ENCODE measurements at regions of chr2 and their contacts with region 1.

Region 1: GRCh38 chr2:7886666-7887065 is 795.2 kb upstream of the ID2 start:
- DNase-seq: peak; percentile 42
- ATAC-seq: peak; percentile 80
- H3K4me3 ChIP-seq: no peak overlapping the region
- H3K27ac ChIP-seq: no peak overlapping the region
- H3K4me1 ChIP-seq: peaks cover 11% of the 10 kb centered on the region; the same call in 1 of the 2 replicates
- H3K27me3 ChIP-seq: no peaks in the 10 kb centered on the region
- CTCF ChIP-seq: no peak
- EP300 ChIP-seq: peak in 1 of 2 experiments; percentile 34; a peak in 2 of 4 replicates
- POLR2A ChIP-seq: no peak
- RAD21 ChIP-seq: no peak

Region 2: DNA sequence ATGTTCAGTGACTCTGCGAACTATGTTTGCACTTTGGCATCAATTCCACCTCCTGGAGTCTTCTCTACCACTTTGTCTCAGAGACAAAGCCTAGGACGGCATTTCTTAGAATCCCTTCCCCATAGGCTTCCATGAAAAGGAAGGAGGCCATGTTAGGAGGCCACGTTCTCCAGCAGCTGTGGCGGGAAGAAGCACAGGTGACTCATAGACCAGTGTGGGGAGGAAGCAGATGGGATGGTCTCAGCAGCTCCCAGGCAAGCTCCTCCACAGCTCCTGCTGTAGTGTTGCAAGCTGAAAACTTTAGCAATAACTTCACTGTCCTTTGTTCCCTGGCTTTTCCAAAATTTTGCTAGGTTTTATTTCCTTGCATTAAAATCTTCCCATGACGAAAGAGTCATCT is 13.9 kb after region 1 on chr2:
- CTCF ChIA-PET with region 1: no interaction called
- POLR2A ChIA-PET with region 1: no interaction called
- in situ Hi-C with region 1: no loop called
- intact Hi-C with region 1: no loop called
- DNase-seq: no peak
- ATAC-seq: no peak
- H3K4me3 ChIP-seq: no peak overlapping the region
- H3K27ac ChIP-seq: no peak overlapping the region
- H3K4me1 ChIP-seq: no peaks in the 10 kb centered on the region
- H3K27me3 ChIP-seq: no peaks in the 10 kb centered on the region; a peak in 1 of 5 replicates
- CTCF ChIP-seq: no peak
- EP300 ChIP-seq: no peak
- POLR2A ChIP-seq: no peak
- RAD21 ChIP-seq: no peak

Region 3: DNA sequence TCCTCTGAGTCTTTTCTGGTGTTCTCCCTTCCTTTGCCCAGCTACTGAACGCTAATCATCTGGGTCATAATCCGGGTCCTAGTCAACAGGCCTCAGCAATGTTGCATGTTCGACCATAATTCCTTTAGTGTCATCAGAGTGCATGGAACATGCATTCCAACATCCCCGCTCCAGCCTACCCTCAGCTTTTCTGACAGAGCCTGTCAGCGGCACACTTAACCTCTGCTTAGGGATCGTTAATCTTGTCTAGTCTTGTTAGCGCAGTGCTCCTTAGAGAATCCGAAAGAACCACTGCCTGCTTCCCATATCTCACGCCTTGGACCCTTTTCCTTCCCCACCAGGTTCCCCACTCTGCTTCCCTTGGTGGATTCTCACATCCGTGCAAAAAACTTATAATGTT is 27.3 kb after region 1 on chr2:
- CTCF ChIA-PET with region 1: no interaction called
- POLR2A ChIA-PET with region 1: no interaction called
- in situ Hi-C with region 1: no loop called
- intact Hi-C with region 1: no loop called
- DNase-seq: no peak
- ATAC-seq: no peak
- H3K4me3 ChIP-seq: no peak overlapping the region
- H3K27ac ChIP-seq: no peak overlapping the region
- H3K4me1 ChIP-seq: no peaks in the 10 kb centered on the region; the same call in 1 of the 2 replicates
- H3K27me3 ChIP-seq: no peaks in the 10 kb centered on the region
- CTCF ChIP-seq: no peak
- EP300 ChIP-seq: no peak
- POLR2A ChIP-seq: no peak
- RAD21 ChIP-seq: no peak

Region 4: DNA sequence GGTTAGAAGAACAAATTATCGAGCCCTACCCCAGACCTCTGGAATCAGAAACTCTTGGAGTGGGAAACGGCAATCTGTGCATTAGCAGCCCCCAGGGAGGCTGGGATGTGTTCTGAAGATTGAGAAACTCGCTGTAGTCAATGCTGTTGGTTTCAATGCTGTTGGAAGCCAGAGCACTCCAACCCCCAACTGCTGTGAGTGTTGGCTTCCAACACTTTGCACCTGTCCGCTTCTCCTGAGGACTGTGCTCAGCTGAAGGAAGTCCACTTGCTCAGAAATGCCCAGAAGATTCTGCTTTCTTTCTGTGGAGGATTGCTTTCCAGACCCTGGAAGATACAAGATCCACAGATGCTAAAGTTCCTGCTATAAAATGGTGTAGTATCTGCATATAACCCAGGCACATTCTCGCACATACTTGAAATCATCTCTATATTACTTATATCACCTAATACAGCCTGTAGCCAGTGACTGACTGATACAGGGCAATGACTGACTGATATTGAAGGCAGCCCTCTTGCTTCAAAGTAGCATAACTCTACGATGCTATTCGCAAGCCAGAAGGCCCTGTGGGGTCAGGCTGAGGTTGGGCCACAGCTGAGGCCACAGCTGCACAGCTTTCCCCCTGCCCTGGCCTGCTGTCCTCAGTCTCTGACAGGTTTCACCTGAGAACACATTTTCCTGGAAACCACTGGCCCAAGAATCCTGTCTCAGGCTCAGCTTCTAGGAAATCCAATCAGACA is 37.5 kb after region 1 on chr2:
- CTCF ChIA-PET with region 1: no interaction called
- POLR2A ChIA-PET with region 1: no interaction called
- in situ Hi-C with region 1: no loop called
- intact Hi-C with region 1: loop called (anchors 5 kb)
- DNase-seq: no peak
- ATAC-seq: no peak
- H3K4me3 ChIP-seq: no peak overlapping the region
- H3K27ac ChIP-seq: no peak overlapping the region
- H3K4me1 ChIP-seq: no peaks in the 10 kb centered on the region
- H3K27me3 ChIP-seq: no peaks in the 10 kb centered on the region
- CTCF ChIP-seq: no peak
- EP300 ChIP-seq: no peak
- POLR2A ChIP-seq: no peak
- RAD21 ChIP-seq: no peak

Measured in HepG2 (cell line).